HEK293 (cell line): ENCODE measurements at regions of chr9 and their contacts with region 1.

Region 1: DNA sequence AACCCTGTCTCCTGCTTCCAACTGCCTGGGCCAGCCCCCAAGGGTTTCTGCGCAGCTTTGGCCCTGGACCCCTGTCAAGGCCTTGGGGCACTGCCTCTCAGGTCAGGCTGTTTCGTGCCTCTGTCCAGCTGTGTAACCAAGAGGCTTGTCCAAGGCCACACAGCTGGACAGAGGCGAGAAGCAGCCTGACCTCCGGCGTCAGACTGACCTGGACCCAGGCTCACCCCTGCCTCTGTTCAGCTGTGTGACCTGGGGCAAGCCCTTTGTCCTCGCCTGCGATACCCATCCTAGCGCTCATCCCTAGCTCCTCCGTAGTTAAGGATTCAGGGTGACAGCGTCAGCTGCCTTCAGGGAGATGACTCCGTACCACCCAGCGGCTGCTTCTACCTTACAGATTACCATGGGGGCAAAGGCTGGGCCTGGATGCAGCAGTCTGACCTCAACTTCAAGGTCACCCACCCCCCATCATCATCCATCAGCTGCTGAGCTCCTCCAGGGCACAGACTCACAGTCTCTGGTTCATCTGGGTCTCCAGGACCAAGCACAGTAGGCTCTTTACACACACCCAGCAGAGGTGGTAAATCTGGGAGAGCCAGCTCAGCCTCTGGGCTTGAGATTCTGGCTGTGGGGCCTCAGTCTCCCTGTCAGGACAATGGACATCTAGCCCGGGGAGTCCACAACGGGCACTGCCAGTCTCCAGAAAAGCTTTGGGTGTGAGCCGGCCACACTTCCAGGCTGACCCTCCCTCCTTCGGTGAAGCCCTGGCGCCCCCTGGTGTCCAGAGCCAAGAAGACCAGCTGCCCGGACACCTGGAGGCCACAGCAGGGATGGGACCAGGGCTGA is 7.9 kb downstream of the AK1 start:
- H3K4me3 ChIP-seq: no peak overlapping the region
- H3K27ac ChIP-seq: no peak overlapping the region
- H3K4me1 ChIP-seq: no peaks in the 10 kb centered on the region; the same call in 1 of the 2 replicates
- CTCF ChIP-seq: peak; percentile 87

Region 2: DNA sequence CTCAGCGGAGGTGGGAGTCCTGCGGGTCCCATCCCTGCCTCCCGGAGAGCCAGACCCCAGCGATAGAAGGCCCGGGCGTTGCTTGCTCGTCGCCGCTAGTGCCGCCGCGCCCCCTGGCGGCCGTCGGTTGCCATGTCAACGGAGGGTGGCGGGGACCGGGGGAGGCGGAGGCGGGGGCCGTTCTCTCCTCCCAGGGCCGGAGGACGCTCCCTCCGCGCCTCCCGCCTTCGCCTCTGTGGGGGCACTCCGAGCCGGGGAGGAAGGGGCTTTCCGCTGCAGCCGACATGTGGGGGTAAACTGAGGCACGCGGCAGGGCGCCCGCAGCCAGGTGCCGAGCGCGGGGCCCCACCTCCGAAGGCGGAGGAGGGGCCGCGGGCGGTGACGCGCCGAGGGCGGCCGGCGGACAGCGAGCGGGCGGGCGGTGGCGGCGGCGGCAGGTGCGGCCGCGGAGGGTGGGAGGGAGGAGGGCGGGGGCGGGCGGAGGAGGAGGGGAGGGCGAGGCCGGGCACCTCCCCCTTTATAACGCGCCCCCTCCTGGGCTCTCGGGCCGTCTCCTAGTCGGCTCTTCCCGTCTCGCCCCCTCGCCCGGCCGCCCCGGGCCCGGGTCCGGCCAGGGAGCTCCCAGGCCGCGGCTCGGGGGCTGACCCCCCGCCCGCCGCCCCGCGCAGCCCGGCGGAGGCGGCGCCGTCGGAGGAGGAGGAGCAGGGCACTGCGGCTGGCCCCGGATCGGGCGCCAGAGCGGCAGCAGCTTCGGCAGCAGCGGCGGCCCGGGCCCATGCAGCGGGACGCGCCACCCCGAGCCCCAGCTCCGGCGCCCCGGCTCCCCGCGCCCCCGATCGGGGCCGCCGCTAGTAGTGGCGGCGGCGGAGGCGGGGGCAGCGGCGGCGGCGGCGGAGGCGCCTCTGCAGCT is 84.3 kb before region 1 on chr9:
- CTCF ChIA-PET with region 1: interaction called, 44 read pairs
- POLR2A ChIA-PET with region 1: interaction called, 3 read pairs
- H3K4me3 ChIP-seq: peak overlapping the region; percentile 67
- H3K27ac ChIP-seq: peak overlapping the region; percentile 95
- H3K4me1 ChIP-seq: no peaks in the 10 kb centered on the region
- CTCF ChIP-seq: peak; percentile 67

Region 3: GRCh38 chr9:127854184-127854806 is 15.2 kb before region 1 on chr9 and contains the start of gene ENG:
- CTCF ChIA-PET with region 1: interaction called, 18 read pairs
- POLR2A ChIA-PET with region 1: interaction called, 8 read pairs
- H3K4me3 ChIP-seq: no peak within 1 kb of the TSS
- H3K27ac ChIP-seq: no peak within 1 kb of the TSS
- H3K4me1 ChIP-seq: no peaks in the 10 kb centered on the region
- CTCF ChIP-seq: no peak

Region 4: GRCh38 chr9:127893392-127893791 is 23.9 kb after region 1 on chr9:
- CTCF ChIA-PET with region 1: interaction called, 10 read pairs
- POLR2A ChIA-PET with region 1: interaction called, 3 read pairs
- H3K4me3 ChIP-seq: no peak overlapping the region
- H3K27ac ChIP-seq: no peak overlapping the region
- H3K4me1 ChIP-seq: no peaks in the 10 kb centered on the region
- CTCF ChIP-seq: no peak